ENCODE measurements at regions of chr6 and their contacts with region 1.

Region 1: GRCh38 chr6:96631248-96631647 is 68.3 kb downstream of the FHL5 start:
- DNase-seq: no peak
- ATAC-seq: no peak
- H3K4me3 ChIP-seq: no peak overlapping the region
- H3K27ac ChIP-seq: no peak overlapping the region
- H3K4me1 ChIP-seq: no peaks in the 10 kb centered on the region
- H3K27me3 ChIP-seq: no peaks in the 10 kb centered on the region
- CTCF ChIP-seq: no peak

Region 2: GRCh38 chr6:96345501-96345900 is 285.7 kb before region 1 on chr6:
- intact Hi-C with region 1: no loop called
- DNase-seq: no peak
- ATAC-seq: no peak
- H3K4me3 ChIP-seq: no peak overlapping the region
- H3K27ac ChIP-seq: no peak overlapping the region
- H3K4me1 ChIP-seq: no peaks in the 10 kb centered on the region
- H3K27me3 ChIP-seq: no peaks in the 10 kb centered on the region
- CTCF ChIP-seq: no peak

Region 3: DNA sequence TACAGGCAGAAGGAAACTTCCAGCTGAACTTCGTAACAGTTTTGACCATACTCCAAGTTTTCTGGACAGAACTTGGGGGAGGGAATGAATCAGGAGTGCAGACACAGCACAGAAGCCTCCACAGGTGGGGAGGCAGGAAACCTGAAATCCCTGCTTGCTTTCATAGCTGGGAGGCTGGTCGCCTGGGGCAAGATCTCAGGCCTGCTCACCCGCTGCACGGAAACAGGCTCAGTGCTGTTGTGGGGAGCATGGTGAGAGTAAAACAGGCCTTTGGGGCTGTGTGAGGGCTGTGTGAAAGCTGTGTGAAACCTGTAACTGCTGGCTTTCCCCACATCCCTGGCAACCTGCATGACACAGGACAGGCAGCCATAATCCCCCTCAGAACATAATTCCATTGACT is 194.9 kb before region 1 on chr6:
- intact Hi-C with region 1: no loop called
- DNase-seq: no peak
- ATAC-seq: no peak
- H3K4me3 ChIP-seq: no peak overlapping the region
- H3K27ac ChIP-seq: no peak overlapping the region
- H3K4me1 ChIP-seq: no peaks in the 10 kb centered on the region
- H3K27me3 ChIP-seq: no peaks in the 10 kb centered on the region
- CTCF ChIP-seq: no peak

Region 4: GRCh38 chr6:97053643-97054411 is 422.6 kb after region 1 on chr6:
- intact Hi-C with region 1: loop called in 1 of 2 experiments (anchors 2 kb)
- DNase-seq: no peak
- ATAC-seq: no peak
- H3K4me3 ChIP-seq: no peak overlapping the region
- H3K27ac ChIP-seq: no peak overlapping the region
- H3K4me1 ChIP-seq: no peaks in the 10 kb centered on the region
- H3K27me3 ChIP-seq: no peaks in the 10 kb centered on the region
- CTCF ChIP-seq: peak; percentile 50

Region 5: GRCh38 chr6:97240222-97240621 is 609.0 kb after region 1 on chr6:
- intact Hi-C with region 1: no loop called
- DNase-seq: no peak
- ATAC-seq: no peak
- H3K4me3 ChIP-seq: no peak overlapping the region
- H3K27ac ChIP-seq: no peak overlapping the region
- H3K4me1 ChIP-seq: no peaks in the 10 kb centered on the region
- H3K27me3 ChIP-seq: no peaks in the 10 kb centered on the region
- CTCF ChIP-seq: no peak

Measured in psoas muscle (tissue), 8 donors.